BJ (cell line): ENCODE measurements at regions of chr16 and their contacts with region 1.

Region 1: DNA sequence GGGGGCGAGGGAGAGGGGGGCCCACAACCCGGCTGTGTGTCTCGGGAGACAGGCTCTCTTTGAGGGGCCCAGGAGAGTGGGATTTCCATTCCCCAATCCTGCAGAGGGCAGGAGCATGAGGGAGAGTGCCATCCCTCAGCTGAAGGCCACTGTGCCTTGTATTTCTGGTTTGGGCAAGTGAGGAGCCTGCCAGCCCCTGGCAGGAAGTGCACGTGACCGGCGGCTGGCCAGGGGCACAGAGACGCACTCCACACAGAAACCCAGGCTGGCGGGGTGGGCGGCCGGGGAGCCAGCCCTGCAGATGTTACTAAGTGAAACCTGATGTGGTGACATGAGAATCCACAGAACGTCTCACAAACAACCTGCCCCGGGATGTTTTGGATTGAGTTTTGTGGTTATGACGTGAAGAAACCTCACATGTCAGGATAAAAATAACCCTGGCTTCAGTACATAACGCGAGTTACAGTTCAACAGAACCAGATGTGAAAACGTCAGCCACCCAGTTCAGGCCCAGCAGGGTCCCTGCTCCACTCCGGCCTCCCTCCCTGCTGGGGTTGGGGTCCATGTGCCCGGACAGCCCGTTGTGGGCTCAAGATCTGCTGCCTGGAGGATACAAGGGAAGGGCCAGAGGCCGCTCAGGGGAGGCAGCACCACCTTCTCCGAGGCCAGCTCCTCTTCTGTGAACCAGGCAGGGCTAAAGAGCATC is 51.7 kb upstream of the MTSS2 start:
- DNase-seq: peak; percentile 97
- H3K4me3 ChIP-seq: no peak overlapping the region
- H3K27me3 ChIP-seq: no peaks in the 10 kb centered on the region
- CTCF ChIP-seq: no peak

Region 2: DNA sequence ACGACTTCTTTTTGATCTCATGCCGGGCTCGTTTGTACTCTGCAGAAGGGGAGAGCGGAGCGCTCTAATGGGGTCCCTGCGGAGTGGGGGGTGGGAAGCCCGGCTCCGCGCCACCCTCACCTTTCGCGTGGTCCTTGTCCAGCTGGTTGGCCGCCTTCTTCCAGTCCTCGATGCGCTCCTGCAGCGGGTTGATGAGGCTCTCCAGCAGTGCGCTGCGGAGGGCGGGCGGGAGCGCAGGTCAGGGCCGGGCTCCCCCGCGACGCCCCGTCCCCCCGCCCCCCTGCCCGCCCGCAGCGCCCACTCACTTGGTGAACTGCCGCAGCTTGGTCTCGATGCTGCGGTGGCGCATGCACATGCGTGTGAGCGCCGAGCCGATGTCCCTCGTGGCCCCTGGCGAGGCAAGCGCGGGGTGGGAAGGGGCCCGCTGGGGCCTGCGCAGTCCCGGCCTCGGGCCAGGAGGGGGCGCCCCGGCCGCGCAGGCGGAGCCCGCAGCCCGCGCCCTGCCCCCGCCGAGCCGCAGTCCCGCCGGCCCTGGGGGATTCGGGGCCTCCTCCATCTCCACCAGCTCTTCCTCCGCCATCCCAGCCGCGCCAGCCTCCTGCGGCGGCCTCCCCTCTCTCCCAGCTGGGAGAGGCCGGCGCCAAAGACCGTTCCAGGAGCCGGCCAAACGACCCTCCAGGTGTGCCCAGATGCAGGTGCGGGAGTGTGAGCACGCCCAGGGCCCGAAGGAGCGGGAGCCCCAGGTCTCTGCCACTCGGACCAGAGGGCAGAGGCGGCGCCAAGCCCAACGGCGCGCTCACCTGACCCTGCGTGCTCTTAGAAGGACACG is 57.6 kb before region 1 on chr16:
- CTCF ChIA-PET with region 1: interaction called, 13 read pairs
- POLR2A ChIA-PET with region 1: no interaction called
- DNase-seq: no peak
- H3K4me3 ChIP-seq: no peak overlapping the region
- H3K27me3 ChIP-seq: no peaks in the 10 kb centered on the region
- CTCF ChIP-seq: 0 out of 2 replicates have a peak, but pooled peaks have one; percentile 18

Region 3: DNA sequence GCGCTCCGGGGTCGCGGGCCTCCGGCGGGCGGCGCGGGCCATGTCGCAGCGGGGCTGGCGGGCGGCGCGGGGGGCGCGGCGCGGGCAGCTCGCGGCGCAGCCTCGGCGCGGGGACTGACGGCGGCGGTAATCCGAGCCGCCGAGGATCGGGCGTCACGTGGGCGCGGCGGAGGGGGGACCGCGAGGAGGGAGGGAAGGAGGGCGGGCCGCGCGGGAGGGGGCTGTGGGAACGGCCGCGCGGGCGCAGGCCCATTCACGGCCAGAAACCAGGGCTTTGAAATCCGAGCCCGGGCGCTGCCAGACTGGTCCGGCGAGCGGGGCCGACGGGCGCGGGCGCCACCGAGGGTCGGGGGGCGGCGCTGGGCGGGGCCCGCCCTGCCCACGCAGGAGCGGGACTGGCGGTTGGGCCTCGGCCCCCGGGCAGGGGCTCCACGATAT is 51.6 kb before region 1 on chr16 and contains the start of gene MTSS2:
- CTCF ChIA-PET with region 1: interaction called, 32 read pairs
- POLR2A ChIA-PET with region 1: no interaction called
- DNase-seq: no peak
- H3K4me3 ChIP-seq: peak within 1 kb of the TSS; percentile 92
- H3K27me3 ChIP-seq: no peaks in the 10 kb centered on the region
- CTCF ChIP-seq: no peak
- polyA plus RNA-seq, gene MTSS2: 86.4 and 170 TPM in 2 replicates

Region 4: GRCh38 chr16:70691223-70692129 is 46.1 kb before region 1 on chr16:
- CTCF ChIA-PET with region 1: interaction called, 32 read pairs
- POLR2A ChIA-PET with region 1: interaction called, 3 read pairs
- DNase-seq: peak; percentile 96
- H3K4me3 ChIP-seq: no peak overlapping the region
- H3K27me3 ChIP-seq: no peaks in the 10 kb centered on the region
- CTCF ChIP-seq: no peak

Region 5: DNA sequence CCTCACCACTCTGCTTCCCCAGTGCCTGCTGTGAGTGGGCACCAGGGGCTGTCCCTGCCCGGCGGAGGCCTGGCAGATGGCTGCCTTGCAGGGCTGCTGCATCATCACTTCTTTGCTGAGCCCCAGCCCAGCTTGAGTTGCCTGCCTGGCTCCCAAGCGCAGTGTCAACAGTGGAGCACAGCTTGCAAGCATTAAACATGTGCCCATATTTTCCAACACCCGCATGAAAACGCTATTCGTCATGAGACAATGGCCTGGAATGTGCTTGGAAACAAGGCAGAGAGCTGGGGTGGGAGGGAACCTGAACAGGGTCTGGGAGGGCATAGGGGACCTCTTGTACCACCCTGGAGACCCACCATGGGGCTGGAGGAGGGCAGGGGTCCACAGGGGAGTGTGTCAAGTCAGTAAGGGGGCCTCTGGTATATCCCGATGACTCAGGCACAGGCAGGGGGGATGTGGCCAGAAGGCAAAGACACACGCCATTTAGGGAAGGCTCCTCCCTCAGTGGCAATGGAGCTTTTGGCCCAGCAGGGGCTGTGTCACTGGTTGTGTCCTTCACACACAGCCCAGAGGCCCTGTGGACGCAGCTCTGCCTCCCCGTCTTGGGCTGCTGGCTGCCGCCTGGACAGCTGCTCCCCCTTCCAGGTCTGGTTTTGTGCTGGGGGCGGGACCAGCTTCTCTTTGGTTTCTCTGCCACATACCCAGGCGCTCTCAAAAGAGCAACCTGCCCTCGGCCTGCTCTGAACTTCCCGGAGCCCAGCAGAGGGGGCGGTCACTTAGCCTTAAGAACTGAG is 34.3 kb before region 1 on chr16:
- CTCF ChIA-PET with region 1: interaction called, 21 read pairs
- POLR2A ChIA-PET with region 1: interaction called, 13 read pairs
- DNase-seq: peak; percentile 90
- H3K4me3 ChIP-seq: no peak overlapping the region
- H3K27me3 ChIP-seq: no peaks in the 10 kb centered on the region
- CTCF ChIP-seq: peak; percentile 71

Region 6: GRCh38 chr16:70708361-70709246 is 28.9 kb before region 1 on chr16:
- CTCF ChIA-PET with region 1: interaction called, 25 read pairs
- POLR2A ChIA-PET with region 1: interaction called, 13 read pairs
- DNase-seq: no peak
- H3K4me3 ChIP-seq: no peak overlapping the region
- H3K27me3 ChIP-seq: no peaks in the 10 kb centered on the region
- CTCF ChIP-seq: no peak

Region 7: GRCh38 chr16:70715055-70715858 is 22.3 kb before region 1 on chr16:
- CTCF ChIA-PET with region 1: interaction called, 25 read pairs
- POLR2A ChIA-PET with region 1: no interaction called
- DNase-seq: peak; percentile 98
- H3K4me3 ChIP-seq: no peak overlapping the region
- H3K27me3 ChIP-seq: no peaks in the 10 kb centered on the region
- CTCF ChIP-seq: peak; percentile 26